HepG2 (cell line): ENCODE measurements at regions of chr5 and their contacts with region 1.

Region 1: GRCh38 chr5:179697993-179698934 is 503 bp upstream of the CANX start:
- DNase-seq: peak; percentile 98
- ATAC-seq: peak; percentile 95
- H3K4me3 ChIP-seq: peak overlapping the region; percentile 74 to 91 (median 91)
- H3K27ac ChIP-seq: peak overlapping the region; percentile 96
- H3K4me1 ChIP-seq: peaks cover 53% of the 10 kb centered on the region
- H3K27me3 ChIP-seq: no peaks in the 10 kb centered on the region; a peak in 1 of 5 replicates
- CTCF ChIP-seq: 0 out of 2 replicates have a peak, but pooled peaks have one; percentile 11
- EP300 ChIP-seq: peak in 1 of 2 experiments; percentile 34; a peak in 2 of 4 replicates
- POLR2A ChIP-seq: peak; percentile 68 to 86
- RAD21 ChIP-seq: peak; percentile 65

Region 2: DNA sequence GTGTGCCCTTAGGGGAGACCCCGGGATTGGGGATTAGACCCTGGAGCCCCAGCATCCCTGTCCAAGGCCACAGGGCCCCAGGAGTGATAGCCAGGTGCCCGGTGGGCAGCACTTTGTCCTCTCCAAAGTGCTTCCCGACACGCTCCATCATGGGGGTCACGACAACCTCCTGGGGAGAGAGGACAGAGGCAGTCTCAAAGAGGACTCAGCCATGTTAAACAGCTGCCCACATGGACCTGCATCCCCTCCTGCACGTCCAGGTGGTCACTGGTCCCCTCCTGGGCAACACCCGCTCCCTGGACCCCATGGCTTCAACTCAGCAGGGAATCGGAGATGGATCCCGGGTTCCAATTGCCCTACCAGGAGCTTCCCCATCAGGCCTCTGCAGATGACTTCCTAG is 54.7 kb before region 1 on chr5:
- CTCF ChIA-PET with region 1: no interaction called
- POLR2A ChIA-PET with region 1: no interaction called
- in situ Hi-C with region 1: no loop called
- intact Hi-C with region 1: no loop called
- DNase-seq: no peak
- ATAC-seq: peak; percentile 11; the same call in 1 of the 3 replicates
- H3K4me3 ChIP-seq: no peak overlapping the region
- H3K27ac ChIP-seq: no peak overlapping the region
- H3K4me1 ChIP-seq: no peaks in the 10 kb centered on the region
- H3K27me3 ChIP-seq: peaks cover 9 to 20% of the 10 kb centered on the region in 2 experiments; a peak in 4 of 5 replicates
- CTCF ChIP-seq: no peak
- EP300 ChIP-seq: no peak
- POLR2A ChIP-seq: no peak
- RAD21 ChIP-seq: no peak

Region 3: GRCh38 chr5:179678223-179679013 is 19.8 kb before region 1 on chr5:
- CTCF ChIA-PET with region 1: no interaction called
- POLR2A ChIA-PET with region 1: interaction called, 42 read pairs
- in situ Hi-C with region 1: no loop called
- intact Hi-C with region 1: loop called (anchors 1 kb)
- DNase-seq: peak; percentile 90
- ATAC-seq: peak; percentile 83
- H3K4me3 ChIP-seq: peak overlapping the region; percentile 69 to 91 (median 81)
- H3K27ac ChIP-seq: peak overlapping the region; percentile 87
- H3K4me1 ChIP-seq: peaks cover 63% of the 10 kb centered on the region
- H3K27me3 ChIP-seq: no peaks in the 10 kb centered on the region; a peak in 1 of 5 replicates
- CTCF ChIP-seq: peak; percentile 68
- EP300 ChIP-seq: peak in 1 of 2 experiments; percentile 35; a peak in 1 of 4 replicates
- POLR2A ChIP-seq: peak in 1 of 2 experiments; percentile 93; a peak in 2 of 4 replicates
- RAD21 ChIP-seq: peak; percentile 64

Region 4: DNA sequence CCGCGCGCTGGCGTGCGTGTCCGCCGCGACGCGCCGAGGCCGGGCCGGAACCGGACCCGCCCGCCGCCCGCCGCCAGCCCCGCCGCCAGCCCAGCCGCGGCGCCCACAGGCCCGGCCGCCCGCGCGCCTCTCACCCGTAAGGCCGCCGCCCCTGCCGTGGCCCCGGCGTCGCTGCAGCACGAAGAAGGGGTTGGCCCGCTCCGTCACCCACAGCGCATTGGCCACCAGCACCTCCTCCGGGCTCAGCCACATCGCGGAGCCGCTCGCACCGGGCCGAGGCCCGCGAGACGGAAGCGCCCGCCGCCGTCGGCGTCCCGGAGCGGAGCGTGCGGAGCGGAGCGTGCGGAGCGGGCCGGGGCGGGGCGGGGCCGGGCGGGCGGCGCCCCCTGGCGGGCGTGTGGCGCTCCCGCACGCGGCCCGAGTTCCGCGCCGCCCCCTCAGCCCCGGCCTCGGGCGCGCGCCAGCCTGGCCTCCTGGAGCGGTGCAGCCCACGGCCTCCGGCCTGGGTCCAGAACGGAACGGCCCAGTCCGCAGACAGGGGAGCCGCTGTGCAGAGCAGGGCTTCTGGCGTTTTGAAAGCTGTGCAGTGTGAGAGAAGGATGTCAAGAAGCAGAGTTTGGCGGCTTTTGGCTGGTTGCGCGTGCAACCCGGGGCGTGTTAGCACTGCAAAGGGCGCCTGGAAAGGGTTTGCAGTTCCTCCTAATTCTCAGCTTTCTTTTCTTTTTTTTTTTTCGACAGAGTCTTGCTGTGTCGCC is 209.5 kb after region 1 on chr5 and contains the start of gene TBC1D9B:
- CTCF ChIA-PET with region 1: no interaction called
- POLR2A ChIA-PET with region 1: no interaction called
- in situ Hi-C with region 1: no loop called
- intact Hi-C with region 1: no loop called
- DNase-seq: peak; percentile 27
- ATAC-seq: peak; percentile 87
- H3K4me3 ChIP-seq: peak within 1 kb of the TSS; percentile 82 to 86 (median 85)
- H3K27ac ChIP-seq: peak within 1 kb of the TSS; percentile 36
- H3K4me1 ChIP-seq: peaks cover 18% of the 10 kb centered on the region
- H3K27me3 ChIP-seq: 0 out of 5 replicates have a peak, but pooled peaks cover 0 to 4% of the 10 kb centered on the region in 2 experiments
- CTCF ChIP-seq: peak; percentile 36; the same call in 1 of the 2 replicates
- EP300 ChIP-seq: no peak
- POLR2A ChIP-seq: peak; percentile 63 to 68
- RAD21 ChIP-seq: no peak; the same call in 1 of the 2 replicates
- total RNA-seq, gene TBC1D9B: 26.8 and 35.0 TPM in 2 replicates